CD8-positive, alpha-beta T cell (primary cell): ENCODE measurements at regions of chr5 and their contacts with region 1.

Region 1: GRCh38 chr5:5141625-5142532 is 1.7 kb downstream of the ADAMTS16 start:
- DNase-seq: peak in 6 of 9 experiments; percentile 23 to 68 (median 56)
- ATAC-seq: no peak
- H3K4me3 ChIP-seq: no peak overlapping the region
- H3K4me3 Mint-ChIP-seq: no peak overlapping the region
- H3K27ac ChIP-seq: no peak overlapping the region
- H3K27ac Mint-ChIP-seq: no peak overlapping the region
- H3K4me1 ChIP-seq: no peaks in the 10 kb centered on the region
- H3K4me1 Mint-ChIP-seq: peaks cover 8% of the 10 kb centered on the region
- H3K27me3 ChIP-seq: peaks cover 2 to 8% of the 10 kb centered on the region in 2 experiments
- H3K27me3 Mint-ChIP-seq: peaks cover 26% of the 10 kb centered on the region
- CTCF ChIP-seq: peak; percentile 95

Region 2: GRCh38 chr5:5398046-5398445 is 256.2 kb after region 1 on chr5:
- CTCF ChIA-PET with region 1: no interaction called
- POLR2A ChIA-PET with region 1: no interaction called
- intact Hi-C with region 1: loop called in 1 of 2 experiments (anchors 5 kb)
- DNase-seq: no peak
- ATAC-seq: no peak
- H3K4me3 ChIP-seq: no peak overlapping the region
- H3K4me3 Mint-ChIP-seq: no peak overlapping the region
- H3K27ac ChIP-seq: no peak overlapping the region
- H3K27ac Mint-ChIP-seq: no peak overlapping the region
- H3K4me1 ChIP-seq: no peaks in the 10 kb centered on the region
- H3K4me1 Mint-ChIP-seq: no peaks in the 10 kb centered on the region
- H3K27me3 ChIP-seq: no peaks in the 10 kb centered on the region
- H3K27me3 Mint-ChIP-seq: no peaks in the 10 kb centered on the region
- CTCF ChIP-seq: no peak

Region 3: GRCh38 chr5:5492087-5492933 is 350.4 kb after region 1 on chr5:
- CTCF ChIA-PET with region 1: no interaction called
- POLR2A ChIA-PET with region 1: no interaction called
- intact Hi-C with region 1: no loop called
- DNase-seq: peak in 7 of 9 experiments; percentile 4 to 78 (median 38)
- ATAC-seq: peak; percentile 35
- H3K4me3 ChIP-seq: no peak overlapping the region
- H3K4me3 Mint-ChIP-seq: peak overlapping the region; percentile 66
- H3K27ac ChIP-seq: no peak overlapping the region
- H3K27ac Mint-ChIP-seq: no peak overlapping the region
- H3K4me1 ChIP-seq: peaks cover 17% of the 10 kb centered on the region
- H3K4me1 Mint-ChIP-seq: peaks cover 21% of the 10 kb centered on the region
- H3K27me3 ChIP-seq: no peaks in the 10 kb centered on the region
- H3K27me3 Mint-ChIP-seq: no peaks in the 10 kb centered on the region
- CTCF ChIP-seq: peak; percentile 81

Region 4: GRCh38 chr5:5523066-5523505 is 381.2 kb after region 1 on chr5:
- CTCF ChIA-PET with region 1: no interaction called
- POLR2A ChIA-PET with region 1: no interaction called
- intact Hi-C with region 1: no loop called
- DNase-seq: peak in 3 of 9 experiments; percentile 13 to 85 (median 74)
- ATAC-seq: peak; percentile 77
- H3K4me3 ChIP-seq: peak overlapping the region in 1 of 2 experiments; percentile 27
- H3K4me3 Mint-ChIP-seq: peak overlapping the region; percentile 78
- H3K27ac ChIP-seq: peak overlapping the region in 1 of 2 experiments; percentile 25
- H3K27ac Mint-ChIP-seq: peak overlapping the region; percentile 22
- H3K4me1 ChIP-seq: peaks cover 7% of the 10 kb centered on the region
- H3K4me1 Mint-ChIP-seq: peaks cover 12% of the 10 kb centered on the region
- H3K27me3 ChIP-seq: no peaks in the 10 kb centered on the region
- H3K27me3 Mint-ChIP-seq: peaks cover 2% of the 10 kb centered on the region
- CTCF ChIP-seq: no peak

Region 5: GRCh38 chr5:5665225-5666075 is 523.6 kb after region 1 on chr5:
- CTCF ChIA-PET with region 1: no interaction called
- POLR2A ChIA-PET with region 1: no interaction called
- intact Hi-C with region 1: no loop called
- DNase-seq: no peak
- ATAC-seq: no peak
- H3K4me3 ChIP-seq: no peak overlapping the region
- H3K4me3 Mint-ChIP-seq: no peak overlapping the region
- H3K27ac ChIP-seq: no peak overlapping the region
- H3K27ac Mint-ChIP-seq: no peak overlapping the region
- H3K4me1 ChIP-seq: no peaks in the 10 kb centered on the region
- H3K4me1 Mint-ChIP-seq: no peaks in the 10 kb centered on the region
- H3K27me3 ChIP-seq: no peaks in the 10 kb centered on the region
- H3K27me3 Mint-ChIP-seq: peaks cover 9% of the 10 kb centered on the region
- CTCF ChIP-seq: no peak